Left ventricle myocardium inferior (tissue), 1 donor: ENCODE measurements at regions of chr4 and their contacts with region 1.

Region 1: DNA sequence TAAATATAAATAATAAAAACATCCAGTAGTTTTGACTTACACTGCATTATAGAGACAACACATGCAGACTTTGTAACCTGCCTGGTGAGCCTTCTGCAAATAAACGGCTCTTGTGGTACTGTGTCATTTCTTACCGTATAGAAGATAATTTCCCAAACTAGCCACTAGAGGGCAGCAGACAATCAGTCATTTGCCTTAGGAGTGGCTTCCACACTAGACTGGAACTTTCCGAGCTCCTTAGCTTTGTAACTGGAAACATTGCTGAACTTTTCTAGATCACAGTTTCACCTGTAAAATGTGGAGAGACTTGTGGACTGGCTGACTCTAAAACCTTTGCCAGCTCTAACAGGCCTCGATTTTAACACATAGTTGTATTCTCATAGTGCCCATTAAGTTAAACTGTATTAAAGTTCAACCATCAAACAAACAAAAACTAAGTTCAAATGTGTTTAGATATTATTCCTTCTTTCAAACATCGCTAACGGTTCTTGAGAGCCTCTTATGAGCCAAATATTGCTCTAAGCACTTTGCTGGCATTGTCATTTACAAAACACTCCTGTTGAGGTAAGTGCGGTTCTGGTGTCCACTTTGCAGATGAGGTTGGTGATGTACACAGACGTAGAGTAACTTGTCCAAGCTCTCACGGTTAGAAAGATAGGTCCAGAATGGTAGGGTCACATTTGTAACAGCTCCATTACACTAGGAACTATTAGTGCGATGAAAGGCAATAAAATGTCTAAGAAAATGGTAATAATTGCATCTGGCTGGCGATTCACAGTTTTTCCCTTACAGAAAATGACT is 345.5 kb downstream of the ANK2 start:
- DNase-seq: no peak
- H3K4me3 ChIP-seq: no peak overlapping the region
- H3K27ac ChIP-seq: no peak overlapping the region
- H3K4me1 ChIP-seq: peaks cover 5% of the 10 kb centered on the region
- H3K27me3 ChIP-seq: no peaks in the 10 kb centered on the region
- CTCF ChIP-seq: peak; percentile 85

Region 2: DNA sequence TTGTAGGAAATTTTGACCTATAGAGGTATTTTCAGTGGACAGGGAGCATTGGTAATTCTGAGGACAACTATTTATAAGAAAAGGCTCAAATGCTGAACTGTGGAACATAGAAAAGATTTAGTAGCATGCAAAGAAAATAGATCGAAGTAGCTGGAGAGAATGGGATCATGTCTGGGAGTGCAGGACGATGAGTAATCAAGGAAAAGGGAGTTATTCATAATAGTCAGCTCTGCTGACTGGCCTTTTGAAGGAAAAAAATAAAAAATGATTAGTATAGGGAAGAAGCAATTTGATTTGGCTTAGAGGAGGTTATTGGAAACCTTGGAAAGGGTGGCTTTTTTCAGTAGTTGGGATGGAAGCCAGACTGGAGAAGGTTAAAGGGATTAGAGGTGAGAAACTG is 368.4 kb before region 1 on chr4:
- intact Hi-C with region 1: no loop called
- DNase-seq: no peak
- H3K4me3 ChIP-seq: no peak overlapping the region
- H3K27ac ChIP-seq: no peak overlapping the region
- H3K4me1 ChIP-seq: peaks cover 10% of the 10 kb centered on the region
- H3K27me3 ChIP-seq: no peaks in the 10 kb centered on the region
- CTCF ChIP-seq: no peak

Region 3: GRCh38 chr4:113547487-113548042 is 152.6 kb after region 1 on chr4:
- intact Hi-C with region 1: loop called (anchors 10 kb)
- DNase-seq: peak; percentile 83
- H3K4me3 ChIP-seq: no peak overlapping the region
- H3K27ac ChIP-seq: peak overlapping the region; percentile 68
- H3K4me1 ChIP-seq: peaks cover 31% of the 10 kb centered on the region
- H3K27me3 ChIP-seq: no peaks in the 10 kb centered on the region
- CTCF ChIP-seq: peak; percentile 97

Region 4: DNA sequence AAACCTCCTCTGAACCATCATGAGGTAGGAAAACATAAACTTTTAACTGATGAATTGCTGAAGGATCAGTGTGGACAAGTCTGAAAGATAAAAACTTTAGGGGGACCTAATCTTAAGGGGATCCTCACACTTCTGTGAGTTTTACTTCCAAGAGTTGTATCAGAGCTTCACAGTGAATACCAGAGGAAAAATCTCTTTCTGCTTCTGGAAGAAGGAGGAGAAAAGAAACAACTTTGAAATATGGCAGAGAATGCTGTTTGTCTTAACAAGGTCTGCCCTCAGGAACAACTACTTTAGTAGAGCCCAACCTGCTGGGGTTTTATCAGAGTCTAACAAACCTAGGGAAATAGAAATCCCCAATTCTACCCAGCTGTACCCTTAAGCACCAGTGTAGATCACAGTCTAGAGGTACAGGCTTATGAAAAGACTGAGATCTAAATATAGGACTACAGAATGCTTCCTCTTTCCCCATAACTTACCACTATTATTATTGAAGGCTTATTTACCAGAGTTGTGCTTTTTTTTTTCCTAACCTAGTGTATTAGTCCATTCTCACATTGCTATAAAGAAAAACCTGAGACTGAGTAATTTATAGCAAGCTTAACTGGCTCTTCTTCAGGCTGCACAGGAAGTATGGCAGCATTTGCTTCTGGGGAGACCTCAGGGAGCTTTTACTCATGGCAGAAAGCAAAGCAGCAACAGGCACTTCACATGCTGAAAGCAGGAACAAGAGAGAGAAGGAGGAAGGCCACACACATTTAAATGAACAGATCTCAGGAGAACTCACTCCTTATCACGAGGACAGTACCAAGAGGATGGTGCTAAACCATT is 198.7 kb after region 1 on chr4:
- intact Hi-C with region 1: no loop called
- DNase-seq: no peak
- H3K4me3 ChIP-seq: no peak overlapping the region
- H3K27ac ChIP-seq: peak overlapping the region; percentile 63
- H3K4me1 ChIP-seq: peaks cover 63% of the 10 kb centered on the region
- H3K27me3 ChIP-seq: no peaks in the 10 kb centered on the region
- CTCF ChIP-seq: no peak

Region 5: DNA sequence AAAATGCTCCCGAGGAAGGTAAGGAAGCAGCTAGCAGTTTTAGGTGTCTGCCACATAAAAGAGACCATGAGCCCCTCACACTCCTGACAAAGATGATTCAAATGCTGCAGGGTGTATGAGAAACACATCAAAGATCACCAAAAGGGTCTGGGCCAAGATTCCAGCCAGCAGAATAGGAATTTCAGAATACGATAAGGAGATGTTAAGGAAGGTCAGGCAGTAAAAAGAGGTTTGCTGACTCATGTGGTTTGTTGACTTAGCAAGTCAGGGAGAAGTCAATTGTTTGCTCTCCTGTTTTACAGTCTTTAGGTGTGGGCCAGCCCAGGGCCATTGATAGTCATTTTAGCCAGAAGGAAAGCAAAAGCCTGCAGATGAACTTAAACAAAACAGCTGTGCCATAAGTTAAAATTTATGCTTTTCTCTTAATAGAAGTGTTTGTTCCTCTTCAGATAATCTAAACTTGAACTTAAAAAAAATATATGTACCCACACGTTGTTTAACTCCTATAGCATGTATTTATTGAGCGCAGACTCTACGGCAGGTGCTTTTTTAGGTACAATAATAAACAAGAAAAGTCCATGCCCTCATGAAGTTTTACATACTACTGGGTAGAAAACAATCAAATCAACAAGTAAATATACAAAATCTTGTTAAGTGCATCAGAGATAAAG is 251.0 kb after region 1 on chr4:
- intact Hi-C with region 1: no loop called
- DNase-seq: no peak
- H3K4me3 ChIP-seq: no peak overlapping the region
- H3K27ac ChIP-seq: peak overlapping the region; percentile 88
- H3K4me1 ChIP-seq: peaks cover 63% of the 10 kb centered on the region
- H3K27me3 ChIP-seq: no peaks in the 10 kb centered on the region
- CTCF ChIP-seq: no peak

Region 6: GRCh38 chr4:113761620-113762185 is 366.8 kb after region 1 on chr4 and contains the start of gene CAMK2D:
- intact Hi-C with region 1: loop called (anchors 10 kb)
- DNase-seq: peak; percentile 89
- H3K4me3 ChIP-seq: peak within 1 kb of the TSS; percentile 92
- H3K27ac ChIP-seq: peak within 1 kb of the TSS; percentile 99
- H3K4me1 ChIP-seq: peaks cover 62% of the 10 kb centered on the region
- H3K27me3 ChIP-seq: no peaks in the 10 kb centered on the region
- CTCF ChIP-seq: peak; percentile 64
- total RNA-seq, gene CAMK2D: 223 TPM